ENCODE measurements at regions of chr1 and their contacts with region 1.

Region 1: DNA sequence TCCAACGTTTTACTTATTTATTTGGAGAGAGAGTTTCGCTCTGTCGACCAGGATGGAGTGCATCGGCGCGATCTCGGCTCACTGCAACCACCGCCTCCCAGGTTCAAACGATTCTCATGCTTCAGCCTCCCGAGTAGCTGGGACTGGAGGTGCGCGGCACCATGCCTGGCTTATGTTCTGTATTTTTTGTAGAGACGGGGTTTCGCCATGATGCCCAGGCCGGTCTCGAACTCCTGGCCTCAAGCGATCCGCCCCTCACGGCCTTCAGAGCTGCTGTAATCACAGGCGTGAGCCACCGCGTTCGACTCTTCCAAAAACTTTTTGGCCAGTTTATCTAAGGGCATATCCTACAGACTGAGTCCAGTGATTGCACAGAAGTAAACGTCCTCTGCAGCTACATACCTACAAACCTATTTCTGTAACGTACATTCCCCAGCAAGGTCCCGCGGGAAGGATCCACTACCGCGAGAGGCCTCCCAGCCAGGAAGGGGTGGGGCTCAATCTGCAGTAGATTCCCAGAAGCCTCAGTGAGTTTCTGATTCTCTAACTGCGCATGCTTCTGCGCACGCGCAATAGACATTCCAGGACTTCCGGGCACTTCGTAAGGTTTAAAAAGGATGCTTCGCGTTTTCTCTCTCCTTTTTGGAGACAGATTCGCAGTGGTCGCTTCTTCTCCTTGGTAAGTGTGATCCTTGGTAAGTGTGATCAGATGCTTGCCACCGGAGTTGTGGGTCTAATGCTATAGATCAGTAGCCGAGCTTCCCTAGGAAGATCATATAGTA is at the start of gene RCC1:
- DNase-seq: peak; percentile 95 to 99 (median 96)
- ATAC-seq: peak; percentile 81
- H3K4me3 ChIP-seq: peak within 1 kb of the TSS; percentile 87
- H3K27ac ChIP-seq: peak within 1 kb of the TSS; percentile 94
- H3K4me1 ChIP-seq: peaks cover 11 to 29% of the 10 kb centered on the region in 2 experiments; a peak in 4 of 5 replicates
- H3K27me3 ChIP-seq: no peaks in the 10 kb centered on the region
- CTCF ChIP-seq: no peak
- EP300 ChIP-seq: no peak; the same call in 1 of the 2 replicates
- POLR2A ChIP-seq: peak; percentile 100
- RAD21 ChIP-seq: 0 out of 4 replicates have a peak, but pooled peaks of 1 of the 2 experiments have one; percentile 10
- polyA plus RNA-seq, gene RCC1: 16.4 to 28.1 TPM

Region 2: GRCh38 chr1:28329395-28330153 is 176.0 kb before region 1 on chr1:
- CTCF ChIA-PET with region 1: no interaction called
- POLR2A ChIA-PET with region 1: interaction called, 46 read pairs
- in situ Hi-C with region 1: no loop called
- intact Hi-C with region 1: no loop called
- DNase-seq: peak in 2 of 4 experiments; percentile 27 to 70
- ATAC-seq: peak; percentile 74
- H3K4me3 ChIP-seq: peak overlapping the region; percentile 72
- H3K27ac ChIP-seq: peak overlapping the region; percentile 84
- H3K4me1 ChIP-seq: peaks cover 17 to 33% of the 10 kb centered on the region in 2 experiments
- H3K27me3 ChIP-seq: no peaks in the 10 kb centered on the region
- CTCF ChIP-seq: no peak
- EP300 ChIP-seq: no peak
- POLR2A ChIP-seq: no peak
- RAD21 ChIP-seq: peak in 1 of 2 experiments; percentile 7; a peak in 1 of 4 replicates

Region 3: GRCh38 chr1:28409090-28409489 is 96.5 kb before region 1 on chr1:
- CTCF ChIA-PET with region 1: no interaction called
- POLR2A ChIA-PET with region 1: interaction called, 20 read pairs
- in situ Hi-C with region 1: no loop called
- intact Hi-C with region 1: no loop called
- DNase-seq: no peak
- ATAC-seq: no peak
- H3K4me3 ChIP-seq: no peak overlapping the region
- H3K27ac ChIP-seq: no peak overlapping the region
- H3K4me1 ChIP-seq: peaks cover 3 to 23% of the 10 kb centered on the region in 2 experiments; a peak in 3 of 5 replicates
- H3K27me3 ChIP-seq: no peaks in the 10 kb centered on the region
- CTCF ChIP-seq: no peak
- EP300 ChIP-seq: no peak
- POLR2A ChIP-seq: no peak
- RAD21 ChIP-seq: no peak

Region 4: GRCh38 chr1:28428012-28428411 is 77.6 kb before region 1 on chr1:
- CTCF ChIA-PET with region 1: no interaction called
- POLR2A ChIA-PET with region 1: interaction called, 18 read pairs
- in situ Hi-C with region 1: no loop called
- intact Hi-C with region 1: no loop called
- DNase-seq: no peak
- ATAC-seq: no peak
- H3K4me3 ChIP-seq: no peak overlapping the region
- H3K27ac ChIP-seq: no peak overlapping the region
- H3K4me1 ChIP-seq: no peaks in the 10 kb centered on the region
- H3K27me3 ChIP-seq: no peaks in the 10 kb centered on the region
- CTCF ChIP-seq: no peak
- EP300 ChIP-seq: no peak
- POLR2A ChIP-seq: no peak
- RAD21 ChIP-seq: no peak

Region 5: GRCh38 chr1:28494737-28495136 is 10.9 kb before region 1 on chr1:
- CTCF ChIA-PET with region 1: no interaction called
- POLR2A ChIA-PET with region 1: interaction called, 54 read pairs
- in situ Hi-C with region 1: no loop called
- intact Hi-C with region 1: no loop called
- DNase-seq: no peak
- ATAC-seq: peak; percentile 51
- H3K4me3 ChIP-seq: no peak overlapping the region
- H3K27ac ChIP-seq: no peak overlapping the region
- H3K4me1 ChIP-seq: peaks cover 6% of the 10 kb centered on the region in 2 experiments; a peak in 2 of 5 replicates
- H3K27me3 ChIP-seq: no peaks in the 10 kb centered on the region
- CTCF ChIP-seq: no peak
- EP300 ChIP-seq: no peak
- POLR2A ChIP-seq: no peak
- RAD21 ChIP-seq: no peak

Region 6: GRCh38 chr1:28552758-28553663 is 47.4 kb after region 1 on chr1 and contains the start of gene TRNAU1AP:
- CTCF ChIA-PET with region 1: no interaction called
- POLR2A ChIA-PET with region 1: interaction called, 11 read pairs
- in situ Hi-C with region 1: no loop called
- intact Hi-C with region 1: no loop called
- DNase-seq: peak; percentile 98 to 99 (median 98)
- ATAC-seq: peak; percentile 98
- H3K4me3 ChIP-seq: peak within 1 kb of the TSS; percentile 57
- H3K27ac ChIP-seq: peak within 1 kb of the TSS; percentile 82
- H3K4me1 ChIP-seq: peaks cover 9 to 20% of the 10 kb centered on the region in 2 experiments; a peak in 4 of 5 replicates
- H3K27me3 ChIP-seq: no peaks in the 10 kb centered on the region
- CTCF ChIP-seq: 0 out of 6 replicates have a peak, but pooled peaks of 1 of the 3 experiments have one; percentile 0
- EP300 ChIP-seq: peak; percentile 47
- POLR2A ChIP-seq: peak; percentile 85
- RAD21 ChIP-seq: no peak
- polyA plus RNA-seq, gene TRNAU1AP: 99.0 to 110 TPM

Region 7: DNA sequence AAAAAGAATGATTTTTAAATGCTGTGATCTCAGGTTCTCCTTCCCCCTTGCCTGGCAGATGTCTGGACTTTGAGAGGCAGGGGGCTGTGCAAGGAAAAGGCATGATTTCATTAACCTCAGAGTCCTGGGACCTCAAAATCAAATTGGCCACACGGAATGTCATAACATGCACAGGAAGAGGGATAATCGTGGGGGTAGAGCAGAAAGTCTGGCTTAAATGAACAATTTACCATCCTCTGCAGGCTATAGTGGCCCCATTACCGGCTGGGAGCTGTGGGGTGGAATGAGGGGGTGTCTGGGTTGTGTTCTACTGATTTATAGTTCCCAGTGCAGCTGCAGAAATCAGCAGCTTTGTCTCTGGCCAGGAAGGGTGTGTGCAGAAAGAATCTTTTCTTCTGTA is 317.2 kb after region 1 on chr1:
- CTCF ChIA-PET with region 1: no interaction called
- POLR2A ChIA-PET with region 1: no interaction called
- in situ Hi-C with region 1: no loop called
- intact Hi-C with region 1: no loop called
- DNase-seq: no peak
- ATAC-seq: no peak
- H3K4me3 ChIP-seq: no peak overlapping the region
- H3K27ac ChIP-seq: no peak overlapping the region
- H3K4me1 ChIP-seq: no peaks in the 10 kb centered on the region
- H3K27me3 ChIP-seq: peaks cover 14 to 73% of the 10 kb centered on the region in 2 experiments
- CTCF ChIP-seq: no peak
- EP300 ChIP-seq: no peak
- POLR2A ChIP-seq: no peak
- RAD21 ChIP-seq: no peak

Region 8: DNA sequence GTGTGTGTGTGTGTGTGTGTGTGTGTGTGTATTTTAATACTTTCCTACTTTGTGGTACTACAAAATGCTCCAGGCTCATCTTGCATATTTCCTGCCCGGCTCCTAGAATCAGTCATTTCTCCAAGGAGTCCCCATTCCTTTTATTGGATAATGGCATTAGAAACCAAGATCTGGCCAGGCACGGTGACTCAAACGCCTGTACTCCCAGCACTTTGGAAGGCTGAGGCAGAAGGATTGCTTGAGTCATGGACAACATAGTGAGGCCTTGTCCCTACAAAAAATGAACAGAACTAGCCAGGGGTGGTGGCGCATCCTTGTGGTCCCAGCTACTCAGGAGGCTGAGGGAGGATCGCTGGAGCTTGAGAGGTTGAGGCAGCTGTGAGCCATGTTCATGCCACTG is 429.1 kb after region 1 on chr1:
- CTCF ChIA-PET with region 1: no interaction called
- POLR2A ChIA-PET with region 1: no interaction called
- in situ Hi-C with region 1: no loop called
- intact Hi-C with region 1: no loop called
- DNase-seq: no peak
- ATAC-seq: peak; percentile 34
- H3K4me3 ChIP-seq: no peak overlapping the region
- H3K27ac ChIP-seq: no peak overlapping the region
- H3K4me1 ChIP-seq: peaks cover 20 to 24% of the 10 kb centered on the region in 2 experiments
- H3K27me3 ChIP-seq: no peaks in the 10 kb centered on the region
- CTCF ChIP-seq: no peak
- EP300 ChIP-seq: no peak
- POLR2A ChIP-seq: no peak
- RAD21 ChIP-seq: no peak